ENCODE measurements at regions of chr17 and their contacts with region 1.

Region 1: DNA sequence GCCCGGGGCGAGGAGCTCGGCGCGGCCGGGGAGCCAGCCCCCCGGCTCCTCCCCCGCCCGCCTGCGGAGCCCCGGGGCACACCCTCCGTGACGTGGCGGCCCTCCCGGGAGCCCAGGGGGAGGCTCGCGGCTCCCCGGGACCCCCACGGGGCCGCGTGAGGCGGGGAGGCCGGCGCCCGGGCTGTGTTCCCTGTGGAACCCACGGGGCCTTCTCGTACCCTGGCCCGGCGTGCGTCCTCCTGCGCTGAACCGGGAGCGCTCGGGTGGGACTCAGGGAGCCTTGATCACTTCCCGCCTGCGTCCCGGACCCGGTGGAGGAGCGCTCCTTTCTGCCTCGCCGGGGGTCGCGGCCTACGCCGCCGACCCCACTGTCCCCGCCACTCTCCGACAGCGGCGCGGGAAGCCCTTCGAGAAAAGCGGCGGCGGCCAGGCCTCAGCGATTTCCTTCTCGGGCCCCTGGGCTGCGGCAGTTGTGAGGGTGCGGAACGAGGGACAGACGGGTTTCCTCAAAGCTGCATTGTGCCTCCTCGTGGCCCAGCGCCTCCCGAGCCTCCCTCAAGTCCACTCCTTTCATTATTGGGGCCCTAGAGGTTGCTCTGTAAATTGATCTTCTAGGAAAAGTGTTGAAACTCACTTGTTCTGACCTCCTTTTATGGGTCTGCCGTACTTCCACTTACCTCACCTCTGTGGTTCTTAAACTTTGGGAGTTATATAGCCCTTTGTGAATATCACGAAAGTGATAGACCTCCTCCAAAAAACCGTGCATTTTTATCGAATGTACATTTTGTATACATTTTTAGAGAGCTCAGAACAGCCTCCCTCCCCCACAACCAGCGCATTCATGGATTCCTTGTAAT is 597 bp downstream of the LIG3 start:
- DNase-seq: peak in 4 of 5 donors; percentile 72 to 83 (median 78)
- H3K4me3 ChIP-seq: peak overlapping the region; percentile 53 to 68
- H3K4me3 Mint-ChIP-seq: peak overlapping the region; percentile 88 to 95 (median 91)
- H3K27ac ChIP-seq: peak overlapping the region; percentile 97
- H3K27ac Mint-ChIP-seq: peak overlapping the region; percentile 90 to 98 (median 94)
- H3K4me1 ChIP-seq: peaks cover 41% of the 10 kb centered on the region
- H3K4me1 Mint-ChIP-seq: peaks cover 39 to 58% (median 49%) of the 10 kb centered on the region in 4 donors
- H3K27me3 ChIP-seq: no peaks in the 10 kb centered on the region
- H3K27me3 Mint-ChIP-seq: no peaks in the 10 kb centered on the region

Region 2: DNA sequence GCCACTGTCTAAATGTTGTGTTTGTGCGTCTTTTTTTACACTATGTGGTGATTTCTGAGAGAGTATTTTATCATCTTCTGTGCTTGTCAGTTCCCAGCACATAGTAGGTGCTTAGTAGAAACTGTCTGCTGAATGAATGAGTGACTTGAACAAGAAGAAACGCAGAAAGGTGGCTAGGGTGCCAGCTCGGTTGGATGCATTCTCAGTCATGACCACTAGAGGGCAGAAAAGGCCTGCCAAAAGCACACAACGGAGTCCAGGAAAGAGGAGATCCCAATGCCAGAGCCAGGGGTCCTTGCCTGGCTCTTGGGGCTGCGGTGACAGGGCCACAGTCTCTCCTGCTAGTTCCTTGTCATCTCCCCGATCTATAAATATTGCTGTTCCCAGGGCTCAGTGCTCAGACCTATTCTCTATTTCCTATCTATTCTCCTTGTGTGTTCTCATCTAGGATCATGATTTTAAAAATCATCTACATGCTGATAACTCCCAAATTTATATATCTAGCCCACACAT is 560.6 kb before region 1 on chr17:
- CTCF ChIA-PET with region 1: no interaction called
- POLR2A ChIA-PET with region 1: no interaction called
- intact Hi-C with region 1: loop called (anchors 1 kb)
- DNase-seq: peak in 4 of 5 donors; percentile 47 to 59 (median 52)
- H3K4me3 ChIP-seq: no peak overlapping the region
- H3K4me3 Mint-ChIP-seq: no peak overlapping the region
- H3K27ac ChIP-seq: no peak overlapping the region
- H3K27ac Mint-ChIP-seq: no peak overlapping the region
- H3K4me1 ChIP-seq: no peaks in the 10 kb centered on the region
- H3K4me1 Mint-ChIP-seq: peaks cover 0 to 9% (median 3%) of the 10 kb centered on the region in 4 donors
- H3K27me3 ChIP-seq: no peaks in the 10 kb centered on the region
- H3K27me3 Mint-ChIP-seq: peaks cover 19 to 45% of the 10 kb centered on the region in 2 donors

Region 3: DNA sequence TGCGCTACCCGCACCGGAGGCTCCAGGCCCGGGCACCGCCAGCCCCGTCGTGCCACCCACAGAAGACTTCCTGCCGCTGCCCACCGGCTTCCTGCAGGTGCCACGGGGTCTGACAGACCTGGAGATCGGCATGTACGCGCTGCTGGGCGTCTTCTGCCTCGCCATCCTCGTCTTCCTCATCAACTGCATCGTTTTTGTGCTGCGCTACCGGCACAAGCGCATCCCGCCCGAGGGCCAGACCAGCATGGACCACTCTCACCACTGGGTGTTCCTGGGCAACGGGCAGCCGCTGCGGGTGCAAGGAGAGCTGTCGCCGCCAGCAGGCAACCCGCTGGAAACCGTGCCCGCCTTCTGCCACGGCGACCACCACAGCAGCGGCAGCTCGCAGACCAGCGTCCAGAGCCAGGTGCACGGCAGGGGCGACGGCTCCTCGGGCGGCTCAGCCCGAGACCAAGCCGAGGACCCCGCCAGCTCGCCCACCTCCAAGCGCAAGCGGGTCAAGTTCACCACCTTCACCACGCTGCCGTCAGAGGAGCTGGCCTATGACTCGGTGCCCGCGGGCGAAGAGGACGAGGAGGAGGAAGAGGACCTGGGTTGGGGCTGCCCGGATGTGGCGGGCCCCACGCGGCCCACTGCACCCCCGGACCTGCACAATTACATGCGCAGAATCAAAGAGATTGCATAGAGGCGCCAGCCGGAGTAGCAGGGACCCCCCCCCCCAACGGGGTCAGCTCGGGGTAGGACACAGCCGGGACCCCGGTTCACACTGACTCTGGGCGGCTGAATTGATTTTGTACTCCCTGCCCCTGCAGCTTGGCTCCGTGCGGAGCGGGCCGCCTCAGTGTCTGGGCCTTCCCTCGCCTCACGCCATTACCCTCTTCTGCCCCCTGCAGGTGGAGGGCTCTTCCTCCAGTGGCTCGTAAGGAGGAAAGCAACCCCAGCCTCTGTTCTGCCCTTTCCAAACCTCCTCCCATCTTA is 343.1 kb before region 1 on chr17:
- CTCF ChIA-PET with region 1: no interaction called
- POLR2A ChIA-PET with region 1: no interaction called
- intact Hi-C with region 1: loop called (anchors 1 kb)
- DNase-seq: peak; percentile 74 to 78 (median 77)
- H3K4me3 ChIP-seq: peak overlapping the region in 1 of 2 donors; percentile 59
- H3K4me3 Mint-ChIP-seq: peak overlapping the region; percentile 79 to 87 (median 84)
- H3K27ac ChIP-seq: no peak overlapping the region
- H3K27ac Mint-ChIP-seq: peak overlapping the region in 3 of 7 donors; percentile 23 to 80 (median 46)
- H3K4me1 ChIP-seq: peaks cover 14% of the 10 kb centered on the region
- H3K4me1 Mint-ChIP-seq: peaks cover 4 to 6% (median 4%) of the 10 kb centered on the region in 4 donors
- H3K27me3 ChIP-seq: peaks cover 5% of the 10 kb centered on the region
- H3K27me3 Mint-ChIP-seq: peaks cover 10 to 23% of the 10 kb centered on the region in 2 donors

Region 4: GRCh38 chr17:34771891-34772290 is 209.0 kb before region 1 on chr17:
- CTCF ChIA-PET with region 1: no interaction called
- POLR2A ChIA-PET with region 1: no interaction called
- intact Hi-C with region 1: no loop called
- DNase-seq: no peak
- H3K4me3 ChIP-seq: no peak overlapping the region
- H3K4me3 Mint-ChIP-seq: no peak overlapping the region
- H3K27ac ChIP-seq: no peak overlapping the region
- H3K27ac Mint-ChIP-seq: no peak overlapping the region
- H3K4me1 ChIP-seq: no peaks in the 10 kb centered on the region
- H3K4me1 Mint-ChIP-seq: no peaks in the 10 kb centered on the region
- H3K27me3 ChIP-seq: no peaks in the 10 kb centered on the region
- H3K27me3 Mint-ChIP-seq: peaks cover 17 to 36% of the 10 kb centered on the region in 2 donors

Region 5: DNA sequence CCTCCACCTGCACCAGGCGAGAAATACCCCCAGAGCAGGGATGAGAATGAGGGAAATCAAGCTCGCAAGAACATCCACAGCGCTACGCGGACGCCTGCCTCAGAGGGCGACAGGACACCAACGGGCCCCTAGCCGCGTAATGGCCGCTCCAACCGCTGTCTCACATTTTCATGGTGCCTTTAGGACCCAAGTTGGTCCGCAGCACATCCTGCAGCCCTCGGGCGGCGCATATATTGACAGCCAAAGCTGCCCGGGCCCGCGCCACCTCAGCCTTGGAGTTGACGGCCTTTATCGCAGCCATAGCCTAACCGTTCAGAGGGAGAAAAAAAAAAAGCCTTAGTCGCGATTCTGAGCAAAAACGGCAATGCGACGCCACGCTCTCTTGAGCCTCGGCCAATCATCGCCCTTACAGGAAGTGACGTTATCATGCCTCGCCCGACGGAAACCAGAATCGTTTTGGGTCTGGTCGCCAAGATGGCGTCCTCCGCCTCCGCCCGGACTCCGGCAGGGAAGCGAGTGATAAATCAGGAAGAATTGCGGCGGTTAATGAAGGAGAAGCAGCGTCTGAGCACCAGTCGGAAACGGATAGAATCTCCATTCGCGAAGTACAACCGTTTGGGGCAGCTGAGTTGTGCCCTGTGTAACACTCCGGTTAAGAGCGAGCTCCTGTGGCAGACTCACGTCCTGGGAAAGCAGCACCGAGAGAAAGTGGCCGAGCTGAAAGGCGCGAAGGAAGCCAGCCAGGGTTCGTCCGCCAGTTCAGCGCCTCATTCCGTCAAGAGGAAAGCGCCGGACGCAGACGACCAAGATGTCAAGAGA is 19.6 kb before region 1 on chr17 and contains the starts of genes CCT6B and ZNF830:
- CTCF ChIA-PET with region 1: interaction called, 4 read pairs
- POLR2A ChIA-PET with region 1: interaction called, 43 read pairs
- intact Hi-C with region 1: loop called (anchors 1 kb)
- DNase-seq: peak; percentile 90 to 95 (median 92)
- H3K4me3 ChIP-seq: peak within 1 kb of the TSS; percentile 82 to 84
- H3K4me3 Mint-ChIP-seq: peak within 1 kb of the TSS; percentile 100
- H3K27ac ChIP-seq: peak within 1 kb of the TSS; percentile 86
- H3K27ac Mint-ChIP-seq: peak within 1 kb of the TSS; percentile 97 to 100 (median 100)
- H3K4me1 ChIP-seq: peaks cover 20% of the 10 kb centered on the region
- H3K4me1 Mint-ChIP-seq: peaks cover 17 to 38% (median 27%) of the 10 kb centered on the region in 4 donors
- H3K27me3 ChIP-seq: no peaks in the 10 kb centered on the region
- H3K27me3 Mint-ChIP-seq: peaks cover 0 to 4% of the 10 kb centered on the region in 2 donors
- total RNA-seq, gene CCT6B: 2.0 to 2.1 TPM
- total RNA-seq, gene ZNF830: 41.0 to 44.0 TPM

Region 6: GRCh38 chr17:34998205-34998604 is 17.3 kb after region 1 on chr17:
- CTCF ChIA-PET with region 1: interaction called, 13 read pairs
- POLR2A ChIA-PET with region 1: interaction called, 8 read pairs
- intact Hi-C with region 1: no loop called
- DNase-seq: peak; percentile 75 to 79 (median 77)
- H3K4me3 ChIP-seq: no peak overlapping the region
- H3K4me3 Mint-ChIP-seq: no peak overlapping the region
- H3K27ac ChIP-seq: no peak overlapping the region
- H3K27ac Mint-ChIP-seq: peak overlapping the region in 6 of 7 donors; percentile 20 to 88 (median 80)
- H3K4me1 ChIP-seq: peaks cover 7% of the 10 kb centered on the region
- H3K4me1 Mint-ChIP-seq: peaks cover 4 to 12% (median 5%) of the 10 kb centered on the region in 4 donors
- H3K27me3 ChIP-seq: no peaks in the 10 kb centered on the region
- H3K27me3 Mint-ChIP-seq: no peaks in the 10 kb centered on the region

Region 7: GRCh38 chr17:35088881-35089585 is 108.1 kb after region 1 on chr17:
- CTCF ChIA-PET with region 1: interaction called, 8 read pairs
- POLR2A ChIA-PET with region 1: interaction called, 33 read pairs
- intact Hi-C with region 1: loop called (anchors 1 kb)
- DNase-seq: peak; percentile 86 to 95 (median 88)
- H3K4me3 ChIP-seq: peak overlapping the region; percentile 76 to 96
- H3K4me3 Mint-ChIP-seq: peak overlapping the region; percentile 93 to 99 (median 96)
- H3K27ac ChIP-seq: peak overlapping the region; percentile 97
- H3K27ac Mint-ChIP-seq: peak overlapping the region; percentile 92 to 99 (median 97)
- H3K4me1 ChIP-seq: peaks cover 42% of the 10 kb centered on the region
- H3K4me1 Mint-ChIP-seq: peaks cover 28 to 55% (median 40%) of the 10 kb centered on the region in 4 donors
- H3K27me3 ChIP-seq: no peaks in the 10 kb centered on the region
- H3K27me3 Mint-ChIP-seq: no peaks in the 10 kb centered on the region